Heart right ventricle (tissue), 16 donors: ENCODE measurements at regions of chr2 and their contacts with region 1.

Region 1: GRCh38 chr2:119218478-119219064 is 5.1 kb upstream of the STEAP3 start:
- DNase-seq: peak; percentile 51 to 58
- ATAC-seq: peak in 4 of 8 donors; percentile 50 to 58 (median 54)
- H3K4me3 ChIP-seq: no peak overlapping the region
- H3K27ac ChIP-seq: no peak overlapping the region
- H3K4me1 ChIP-seq: peaks cover 0 to 16% (median 9%) of the 10 kb centered on the region in 9 donors
- H3K27me3 ChIP-seq: no peaks in the 10 kb centered on the region
- CTCF ChIP-seq: peak in 8 of 9 donors; percentile 17 to 65 (median 50)

Region 2: GRCh38 chr2:119142824-119143223 is 75.7 kb before region 1 on chr2:
- intact Hi-C with region 1: no loop called
- DNase-seq: no peak
- ATAC-seq: no peak
- H3K4me3 ChIP-seq: no peak overlapping the region
- H3K27ac ChIP-seq: no peak overlapping the region
- H3K4me1 ChIP-seq: peaks cover 0 to 4% (median 0%) of the 10 kb centered on the region in 9 donors
- H3K27me3 ChIP-seq: peaks cover 0 to 40% (median 9%) of the 10 kb centered on the region in 7 donors
- CTCF ChIP-seq: no peak

Region 3: DNA sequence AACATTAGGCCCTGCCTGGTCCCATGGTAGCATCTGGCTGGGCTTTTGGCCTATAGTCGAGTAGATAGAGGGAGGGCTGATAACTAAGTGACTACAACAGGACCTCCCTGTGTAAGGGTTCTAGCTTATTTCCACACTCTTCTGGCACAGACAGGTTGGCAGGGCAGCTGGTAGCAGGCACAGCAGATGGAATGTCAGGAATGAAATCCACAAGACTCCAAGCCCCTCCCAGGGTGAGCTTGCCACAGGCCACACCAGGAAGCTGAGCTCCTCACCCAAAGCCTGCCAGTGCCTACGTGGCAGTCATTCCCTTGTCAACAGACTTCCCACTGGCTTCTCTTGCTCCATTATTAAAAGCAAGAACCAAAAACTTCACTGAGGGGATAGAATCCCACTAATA is 39.4 kb before region 1 on chr2:
- intact Hi-C with region 1: no loop called
- DNase-seq: no peak
- ATAC-seq: peak in 4 of 8 donors; percentile 31 to 67 (median 48)
- H3K4me3 ChIP-seq: no peak overlapping the region
- H3K27ac ChIP-seq: no peak overlapping the region
- H3K4me1 ChIP-seq: no peaks in the 10 kb centered on the region
- H3K27me3 ChIP-seq: peaks cover 0 to 4% (median 0%) of the 10 kb centered on the region in 7 donors
- CTCF ChIP-seq: no peak

Region 4: GRCh38 chr2:119264781-119265692 is 46.5 kb after region 1 on chr2:
- intact Hi-C with region 1: loop called in 2 of 10 experiments (anchors 2 to 5 kb)
- DNase-seq: peak in 1 of 2 donors; percentile 23
- ATAC-seq: peak; percentile 71 to 89 (median 83)
- H3K4me3 ChIP-seq: no peak overlapping the region
- H3K27ac ChIP-seq: no peak overlapping the region
- H3K4me1 ChIP-seq: peaks cover 0 to 13% (median 0%) of the 10 kb centered on the region in 9 donors
- H3K27me3 ChIP-seq: no peaks in the 10 kb centered on the region
- CTCF ChIP-seq: peak; percentile 33 to 76 (median 72)

Region 5: GRCh38 chr2:119290859-119291587 is 72.5 kb after region 1 on chr2:
- intact Hi-C with region 1: loop called in 5 of 10 experiments (anchors 1 to 10 kb)
- DNase-seq: peak; percentile 78 to 86
- ATAC-seq: peak; percentile 60 to 90 (median 86)
- H3K4me3 ChIP-seq: no peak overlapping the region
- H3K27ac ChIP-seq: no peak overlapping the region
- H3K4me1 ChIP-seq: peaks cover 0 to 18% (median 3%) of the 10 kb centered on the region in 9 donors
- H3K27me3 ChIP-seq: no peaks in the 10 kb centered on the region
- CTCF ChIP-seq: peak; percentile 19 to 99 (median 91)

Region 6: DNA sequence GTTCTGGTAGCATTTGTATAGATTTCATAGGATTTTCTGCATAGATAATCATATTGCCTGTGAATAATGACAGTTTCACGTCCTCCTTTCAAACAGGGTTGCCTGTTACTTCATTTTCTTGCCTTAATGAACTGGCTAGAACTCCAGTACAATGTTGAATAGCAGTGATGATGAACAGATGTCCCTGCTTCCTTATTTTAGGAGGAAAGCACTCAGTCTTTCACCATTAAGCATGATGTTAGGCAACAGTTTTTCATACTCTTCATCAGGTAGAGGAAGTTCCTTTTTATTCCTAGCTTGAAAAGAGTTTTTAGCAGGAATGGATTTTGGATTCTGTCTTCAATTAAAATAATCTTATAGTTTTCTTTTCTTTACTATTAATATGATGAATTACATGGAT is 108.4 kb after region 1 on chr2:
- intact Hi-C with region 1: no loop called
- DNase-seq: no peak
- ATAC-seq: no peak
- H3K4me3 ChIP-seq: no peak overlapping the region
- H3K27ac ChIP-seq: no peak overlapping the region
- H3K4me1 ChIP-seq: peaks cover 0 to 10% (median 0%) of the 10 kb centered on the region in 9 donors
- H3K27me3 ChIP-seq: no peaks in the 10 kb centered on the region
- CTCF ChIP-seq: no peak

Region 7: DNA sequence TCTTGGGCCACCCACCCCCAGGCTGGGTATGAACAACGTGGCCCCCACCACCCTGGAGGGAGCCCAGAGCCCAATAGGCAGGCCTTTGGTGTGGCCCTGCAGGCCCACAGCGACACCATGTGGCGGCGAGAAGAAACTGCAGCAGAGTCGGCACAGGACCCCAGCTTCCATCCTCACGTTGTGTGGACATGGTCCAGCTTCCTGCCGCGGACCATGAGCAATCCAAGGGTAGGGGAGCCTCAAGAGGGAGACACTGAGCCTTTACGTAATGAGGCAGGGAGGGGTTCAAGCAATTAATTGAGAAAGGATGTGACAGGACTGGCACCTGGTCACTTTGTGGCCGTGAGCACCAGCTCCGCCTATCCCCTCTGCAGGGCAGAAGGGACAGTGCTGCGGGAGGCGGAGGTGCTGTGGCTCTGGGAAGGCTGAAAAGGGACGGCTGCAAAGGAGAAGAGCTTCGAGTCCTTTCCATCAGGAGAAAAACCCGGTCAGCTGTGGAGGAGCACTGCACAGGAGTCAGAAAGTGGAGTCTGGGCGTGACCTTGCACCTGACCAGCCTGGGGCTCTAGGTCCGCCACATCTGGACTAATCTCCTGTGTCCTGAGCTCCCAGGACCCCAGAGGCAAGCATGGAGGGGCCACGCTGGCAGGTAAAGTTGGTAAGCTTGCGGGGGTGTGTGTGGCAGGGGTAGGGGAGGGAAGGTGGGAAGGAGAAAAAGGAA is 257.9 kb after region 1 on chr2:
- intact Hi-C with region 1: loop called in 3 of 10 experiments (anchors 10 kb)
- DNase-seq: peak in 1 of 2 donors; percentile 52
- ATAC-seq: peak; percentile 57 to 78 (median 72)
- H3K4me3 ChIP-seq: peak overlapping the region in 2 of 10 donors; percentile 20
- H3K27ac ChIP-seq: peak overlapping the region in 5 of 10 donors; percentile 28 to 73 (median 44)
- H3K4me1 ChIP-seq: peaks cover 0 to 39% (median 18%) of the 10 kb centered on the region in 9 donors
- H3K27me3 ChIP-seq: peaks cover 0 to 6% (median 0%) of the 10 kb centered on the region in 7 donors
- CTCF ChIP-seq: peak; percentile 89 to 98 (median 96)